ENCODE measurements at regions of chr11 and their contacts with region 1.

Region 1: DNA sequence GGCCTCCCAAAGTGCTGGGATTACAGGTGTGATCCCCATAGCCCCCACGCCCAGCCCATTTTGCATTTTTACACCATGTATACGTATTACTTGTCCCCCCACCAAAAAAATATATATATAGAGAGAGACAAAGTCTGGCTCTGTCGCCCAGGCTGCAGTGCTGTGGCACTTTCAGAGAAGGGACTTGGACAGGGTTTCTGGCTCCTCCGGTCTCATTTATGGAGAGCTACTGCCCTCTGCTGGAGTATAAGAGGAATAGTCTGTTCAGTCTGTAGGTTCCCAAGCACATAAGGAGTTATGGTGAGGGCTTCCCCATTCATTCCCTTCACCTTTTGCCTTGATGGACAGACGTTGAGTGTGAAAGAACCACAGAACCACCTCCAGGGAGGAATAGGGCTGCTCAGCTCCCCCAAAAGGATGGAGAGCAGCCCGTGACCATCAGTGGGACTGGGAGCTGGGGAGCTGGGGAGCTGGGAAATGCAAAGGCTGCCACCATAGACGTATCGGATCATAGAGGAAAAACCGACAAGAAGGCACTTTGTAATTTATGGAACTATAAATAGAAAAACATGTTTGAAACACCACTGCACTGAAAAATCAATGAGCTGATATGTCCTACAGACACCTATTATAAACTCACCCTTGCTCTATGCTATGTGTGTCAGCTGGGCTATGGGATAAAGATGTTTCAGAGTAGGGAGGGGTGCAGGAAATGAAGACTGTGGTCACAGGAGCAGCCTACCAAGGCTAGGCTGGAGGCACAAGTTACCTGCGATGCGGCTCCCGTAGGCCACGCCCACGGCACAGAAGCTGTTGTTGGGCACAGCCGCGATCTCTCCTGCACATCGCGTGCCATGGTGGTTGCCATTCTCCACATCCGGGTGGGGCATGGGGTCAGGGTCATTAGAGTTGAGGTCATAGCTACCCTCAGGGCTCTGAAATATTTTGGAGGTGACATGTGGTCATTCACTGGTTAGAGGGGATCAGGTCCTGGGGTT is 5.2 kb downstream of the PCSK7 start:
- DNase-seq: peak; percentile 39 to 73
- H3K4me3 ChIP-seq: no peak overlapping the region
- H3K27ac ChIP-seq: no peak overlapping the region
- H3K4me1 ChIP-seq: peaks cover 21% of the 10 kb centered on the region
- H3K27me3 ChIP-seq: no peaks in the 10 kb centered on the region
- CTCF ChIP-seq: peak; percentile 93

Region 2: GRCh38 chr11:116732271-116733042 is 494.2 kb before region 1 on chr11:
- CTCF ChIA-PET with region 1: no interaction called
- POLR2A ChIA-PET with region 1: no interaction called
- intact Hi-C with region 1: loop called (anchors 2 kb)
- DNase-seq: peak in 1 of 2 experiments; percentile 45
- H3K4me3 ChIP-seq: no peak overlapping the region
- H3K27ac ChIP-seq: no peak overlapping the region
- H3K4me1 ChIP-seq: no peaks in the 10 kb centered on the region
- H3K27me3 ChIP-seq: peaks cover 49% of the 10 kb centered on the region
- CTCF ChIP-seq: peak; percentile 89

Region 3: GRCh38 chr11:116772443-116773202 is 454.1 kb before region 1 on chr11 and contains the start of gene BUD13:
- CTCF ChIA-PET with region 1: no interaction called
- POLR2A ChIA-PET with region 1: no interaction called
- intact Hi-C with region 1: loop called (anchors 1 kb)
- DNase-seq: peak; percentile 76 to 90
- H3K4me3 ChIP-seq: peak within 1 kb of the TSS; percentile 91
- H3K27ac ChIP-seq: peak within 1 kb of the TSS; percentile 69
- H3K4me1 ChIP-seq: peaks cover 32% of the 10 kb centered on the region
- H3K27me3 ChIP-seq: no peaks in the 10 kb centered on the region
- CTCF ChIP-seq: no peak
- total RNA-seq, gene BUD13: 13.5 and 16.4 TPM in 2 replicates

Region 4: DNA sequence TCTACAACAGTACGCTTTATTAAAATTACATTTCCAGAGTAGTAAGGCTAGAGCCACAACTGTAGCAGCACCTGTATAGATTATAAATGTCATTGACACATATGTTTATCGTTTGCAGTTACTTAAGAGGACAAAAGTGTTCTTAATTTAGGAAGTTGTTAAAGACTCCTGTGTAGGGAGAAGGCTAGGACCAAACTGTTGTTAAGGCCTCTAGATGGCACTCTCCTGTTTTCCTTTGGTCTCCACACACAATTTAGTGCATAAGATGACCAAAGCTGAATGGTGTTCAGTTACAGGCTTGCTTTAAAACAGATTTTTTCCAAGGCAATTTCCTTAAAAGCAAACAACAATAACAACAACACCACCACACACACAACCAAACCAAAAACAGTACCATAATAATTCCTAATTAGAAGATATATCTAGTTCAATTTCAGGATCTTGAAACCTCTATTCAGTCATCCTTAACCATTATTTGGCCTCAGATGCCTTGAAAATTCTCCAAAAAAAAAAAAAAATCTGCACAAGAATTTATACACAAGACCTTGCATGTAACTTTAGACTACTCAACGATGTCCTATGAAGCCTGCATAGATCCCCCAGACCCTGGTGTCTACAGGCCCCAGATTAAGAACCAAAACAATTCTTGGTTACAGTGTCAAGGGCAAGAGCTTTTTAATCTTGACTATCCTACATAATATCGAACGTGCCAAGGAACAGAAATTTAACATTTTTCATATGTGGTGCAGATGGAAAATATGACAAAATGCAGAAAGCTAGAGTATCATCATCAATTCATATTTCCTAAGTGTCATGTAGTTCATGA is 346.7 kb before region 1 on chr11:
- CTCF ChIA-PET with region 1: no interaction called
- POLR2A ChIA-PET with region 1: no interaction called
- intact Hi-C with region 1: loop called (anchors 1 kb)
- DNase-seq: peak; percentile 8 to 65
- H3K4me3 ChIP-seq: no peak overlapping the region
- H3K27ac ChIP-seq: no peak overlapping the region
- H3K4me1 ChIP-seq: 0 out of 2 replicates have a peak, but pooled peaks cover 4% of the 10 kb centered on the region
- H3K27me3 ChIP-seq: no peaks in the 10 kb centered on the region
- CTCF ChIP-seq: peak; percentile 86

Region 5: GRCh38 chr11:116927163-116927974 is 299.3 kb before region 1 on chr11:
- CTCF ChIA-PET with region 1: no interaction called
- POLR2A ChIA-PET with region 1: no interaction called
- intact Hi-C with region 1: no loop called
- DNase-seq: no peak
- H3K4me3 ChIP-seq: no peak overlapping the region
- H3K27ac ChIP-seq: no peak overlapping the region
- H3K4me1 ChIP-seq: peaks cover 8% of the 10 kb centered on the region
- H3K27me3 ChIP-seq: no peaks in the 10 kb centered on the region
- CTCF ChIP-seq: peak; percentile 56

Region 6: GRCh38 chr11:117178210-117179034 is 48.3 kb before region 1 on chr11 and contains the start of gene SIDT2:
- CTCF ChIA-PET with region 1: interaction called, 5 read pairs
- POLR2A ChIA-PET with region 1: interaction called, 4 read pairs
- intact Hi-C with region 1: loop called (anchors 2 kb)
- DNase-seq: peak; percentile 85 to 87
- H3K4me3 ChIP-seq: peak within 1 kb of the TSS; percentile 63
- H3K27ac ChIP-seq: no peak within 1 kb of the TSS
- H3K4me1 ChIP-seq: peaks cover 19% of the 10 kb centered on the region
- H3K27me3 ChIP-seq: no peaks in the 10 kb centered on the region
- CTCF ChIP-seq: no peak
- total RNA-seq, gene SIDT2: 20.1 and 20.3 TPM in 2 replicates